Activated CD8-positive, alpha-beta T cell treated with anti-CD3 and anti-CD28 coated beads, Interleukin-2, amount 10 ng/mL, durations not matched to agents 7 days and 5 days (primary cell): ENCODE measurements at regions of chr17 and their contacts with region 1.

Region 1: GRCh38 chr17:44344939-44345453 is at the start of gene GRN:
- DNase-seq: peak; percentile 91
- ATAC-seq: peak; percentile 99
- H3K4me3 Mint-ChIP-seq: peak within 1 kb of the TSS; percentile 88
- H3K27ac Mint-ChIP-seq: peak within 1 kb of the TSS; percentile 75
- H3K4me1 Mint-ChIP-seq: peaks cover 30% of the 10 kb centered on the region
- H3K27me3 Mint-ChIP-seq: peaks cover 20% of the 10 kb centered on the region
- total RNA-seq, gene GRN: 45.6 to 46.7 TPM

Region 2: DNA sequence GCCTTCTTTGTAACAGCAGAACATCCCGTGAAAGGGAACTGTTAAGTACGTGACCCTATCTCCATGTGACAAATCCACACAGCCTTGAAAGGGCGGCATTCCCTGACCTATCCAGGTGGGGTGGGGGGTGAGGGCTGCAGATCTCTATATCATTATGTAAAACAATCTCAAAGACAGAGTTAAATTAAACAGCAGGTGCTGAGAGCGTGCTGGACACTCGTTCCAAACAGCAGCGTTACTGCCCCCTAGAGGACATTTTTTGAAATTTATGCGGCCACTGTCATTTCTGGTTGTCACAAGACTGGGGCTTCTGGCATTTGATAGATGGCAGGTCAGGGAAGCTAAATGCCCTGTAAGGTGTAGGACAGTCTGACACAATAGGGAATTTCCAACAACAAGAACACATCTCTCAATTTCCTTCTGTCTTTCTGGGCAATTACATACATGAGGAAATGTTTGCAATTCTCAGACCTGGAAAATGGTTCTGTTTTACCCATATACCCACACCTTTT is 13.7 kb before region 1 on chr17:
- CTCF ChIA-PET with region 1: interaction called, 70 read pairs
- POLR2A ChIA-PET with region 1: interaction called, 7 read pairs
- DNase-seq: peak; percentile 87
- ATAC-seq: peak; percentile 42
- H3K4me3 Mint-ChIP-seq: no peak overlapping the region
- H3K27ac Mint-ChIP-seq: peak overlapping the region; percentile 49
- H3K4me1 Mint-ChIP-seq: peaks cover 18% of the 10 kb centered on the region
- H3K27me3 Mint-ChIP-seq: no peaks in the 10 kb centered on the region

Region 3: GRCh38 chr17:44356241-44356640 is 11.2 kb after region 1 on chr17:
- CTCF ChIA-PET with region 1: interaction called, 19 read pairs
- POLR2A ChIA-PET with region 1: no interaction called
- DNase-seq: no peak
- ATAC-seq: no peak
- H3K4me3 Mint-ChIP-seq: no peak overlapping the region
- H3K27ac Mint-ChIP-seq: no peak overlapping the region
- H3K4me1 Mint-ChIP-seq: peaks cover 1% of the 10 kb centered on the region
- H3K27me3 Mint-ChIP-seq: peaks cover 13% of the 10 kb centered on the region

Region 4: GRCh38 chr17:44385287-44386181 is 40.5 kb after region 1 on chr17:
- CTCF ChIA-PET with region 1: no interaction called
- POLR2A ChIA-PET with region 1: no interaction called
- DNase-seq: peak; percentile 87
- ATAC-seq: peak; percentile 92
- H3K4me3 Mint-ChIP-seq: peak overlapping the region; percentile 71
- H3K27ac Mint-ChIP-seq: no peak overlapping the region
- H3K4me1 Mint-ChIP-seq: peaks cover 22% of the 10 kb centered on the region
- H3K27me3 Mint-ChIP-seq: peaks cover 29% of the 10 kb centered on the region

Region 5: GRCh38 chr17:44400226-44400847 is 55.3 kb after region 1 on chr17:
- CTCF ChIA-PET with region 1: no interaction called
- POLR2A ChIA-PET with region 1: no interaction called
- DNase-seq: no peak
- ATAC-seq: no peak
- H3K4me3 Mint-ChIP-seq: no peak overlapping the region
- H3K27ac Mint-ChIP-seq: no peak overlapping the region
- H3K4me1 Mint-ChIP-seq: peaks cover 14% of the 10 kb centered on the region
- H3K27me3 Mint-ChIP-seq: no peaks in the 10 kb centered on the region

Region 6: GRCh38 chr17:44543213-44543904 is 198.4 kb after region 1 on chr17:
- CTCF ChIA-PET with region 1: no interaction called
- POLR2A ChIA-PET with region 1: no interaction called
- DNase-seq: no peak
- ATAC-seq: no peak
- H3K4me3 Mint-ChIP-seq: no peak overlapping the region
- H3K27ac Mint-ChIP-seq: no peak overlapping the region
- H3K4me1 Mint-ChIP-seq: no peaks in the 10 kb centered on the region
- H3K27me3 Mint-ChIP-seq: peaks cover 7% of the 10 kb centered on the region

Region 7: DNA sequence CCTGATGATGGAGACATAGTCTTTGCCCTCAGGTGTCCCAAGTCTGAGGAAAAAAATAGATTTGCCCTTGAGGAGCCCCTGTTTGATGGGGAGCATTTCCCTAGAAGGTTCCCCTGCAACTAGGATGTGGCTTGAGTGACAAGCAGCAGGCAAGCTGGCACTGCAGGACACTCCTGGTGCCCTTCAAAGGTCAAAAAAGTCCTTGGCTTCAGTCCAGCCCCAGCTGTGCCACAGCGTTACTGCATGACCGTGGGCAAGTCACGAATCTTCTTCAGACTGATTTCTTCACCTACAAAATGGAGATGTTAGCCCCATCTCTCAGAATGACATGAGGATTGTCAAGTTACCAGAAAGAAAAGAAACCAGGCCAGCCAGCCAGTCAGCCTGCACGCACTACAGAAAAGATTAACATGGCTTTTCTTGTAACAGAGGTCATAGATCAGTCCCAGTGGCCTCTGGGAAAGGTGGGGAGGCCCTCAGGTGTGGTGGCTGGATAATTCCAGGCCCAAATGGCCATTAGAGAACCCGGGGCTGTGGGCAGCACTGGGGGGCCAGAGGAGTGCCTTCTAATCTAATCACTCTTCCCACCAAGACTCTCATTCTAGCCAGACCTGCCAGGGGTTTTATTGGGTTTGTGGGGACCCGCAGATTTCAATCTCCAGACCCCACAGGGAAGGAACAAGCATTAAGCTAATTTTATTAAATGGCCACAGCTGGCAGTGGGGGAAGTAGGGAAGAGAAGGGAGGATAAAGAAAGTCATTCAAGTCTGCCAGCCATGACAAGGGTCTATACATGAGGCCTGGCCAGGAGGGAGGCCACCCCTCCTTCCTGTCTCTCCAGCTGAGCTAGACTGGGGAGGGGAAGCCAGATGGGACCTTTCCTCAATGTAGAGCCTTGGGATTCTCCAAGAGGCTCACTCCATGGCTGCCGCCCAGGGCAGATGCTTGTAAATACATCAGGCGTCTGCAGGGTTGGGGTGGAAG is 612.3 kb after region 1 on chr17:
- CTCF ChIA-PET with region 1: no interaction called
- POLR2A ChIA-PET with region 1: no interaction called
- DNase-seq: no peak
- ATAC-seq: no peak
- H3K4me3 Mint-ChIP-seq: no peak overlapping the region
- H3K27ac Mint-ChIP-seq: no peak overlapping the region
- H3K4me1 Mint-ChIP-seq: peaks cover 5% of the 10 kb centered on the region
- H3K27me3 Mint-ChIP-seq: peaks cover 34% of the 10 kb centered on the region